ENCODE measurements at regions of chr2 and their contacts with region 1.

Region 1: GRCh38 chr2:157312866-157313486 is 12.6 kb downstream of the ERMN start:
- DNase-seq: peak; percentile 17
- H3K4me3 Mint-ChIP-seq: no peak overlapping the region
- H3K27ac Mint-ChIP-seq: peak overlapping the region; percentile 41
- H3K4me1 Mint-ChIP-seq: peaks cover 49% of the 10 kb centered on the region
- H3K27me3 Mint-ChIP-seq: no peaks in the 10 kb centered on the region

Region 2: GRCh38 chr2:156341452-156342253 is 971.3 kb before region 1 on chr2:
- CTCF ChIA-PET with region 1: no interaction called
- intact Hi-C with region 1: loop called (anchors 2 kb)
- DNase-seq: peak; percentile 94
- H3K4me3 Mint-ChIP-seq: peak overlapping the region; percentile 84
- H3K27ac Mint-ChIP-seq: peak overlapping the region; percentile 96
- H3K4me1 Mint-ChIP-seq: peaks cover 50% of the 10 kb centered on the region
- H3K27me3 Mint-ChIP-seq: no peaks in the 10 kb centered on the region

Region 3: GRCh38 chr2:157336137-157337010 is 23.4 kb after region 1 on chr2:
- CTCF ChIA-PET with region 1: interaction called, 263 read pairs
- intact Hi-C with region 1: loop called (anchors 1 kb)
- DNase-seq: peak; percentile 68
- H3K4me3 Mint-ChIP-seq: peak overlapping the region; percentile 40
- H3K27ac Mint-ChIP-seq: no peak overlapping the region
- H3K4me1 Mint-ChIP-seq: peaks cover 78% of the 10 kb centered on the region
- H3K27me3 Mint-ChIP-seq: no peaks in the 10 kb centered on the region

Region 4: DNA sequence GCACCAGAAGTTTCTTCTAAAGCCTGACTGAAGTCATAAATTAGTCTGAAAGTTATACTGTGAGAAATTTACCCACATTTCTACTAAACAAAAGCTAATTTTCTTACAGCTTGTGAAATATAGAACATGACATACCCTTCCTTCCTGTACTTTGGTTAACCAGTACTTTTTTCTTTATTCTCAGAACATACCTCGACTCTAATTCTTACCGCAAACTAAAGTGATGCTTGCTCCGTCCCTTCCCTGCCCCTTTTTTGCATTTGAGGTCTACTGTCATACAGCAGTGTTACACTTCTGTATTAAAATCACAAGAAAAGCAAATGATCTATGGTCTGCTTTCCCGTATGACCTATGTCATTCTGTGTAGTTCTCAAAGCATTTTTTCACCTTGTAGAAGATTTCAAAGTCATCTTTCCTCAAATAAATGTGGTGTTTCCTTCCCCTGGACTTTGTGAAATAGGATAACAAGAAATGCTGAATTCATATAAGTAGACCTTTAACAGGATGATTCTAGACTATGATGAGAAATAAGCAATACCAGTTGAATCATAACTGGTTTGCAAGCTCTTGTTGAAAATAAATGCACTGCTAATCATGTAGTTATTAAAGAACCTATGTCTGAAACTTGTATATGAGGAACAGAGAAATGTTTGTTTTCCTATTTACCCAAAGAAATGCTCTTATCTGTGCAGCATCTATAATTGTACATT is 100.5 kb after region 1 on chr2:
- CTCF ChIA-PET with region 1: interaction called, 3 read pairs
- intact Hi-C with region 1: loop called (anchors 1 kb)
- DNase-seq: peak; percentile 78
- H3K4me3 Mint-ChIP-seq: peak overlapping the region; percentile 64
- H3K27ac Mint-ChIP-seq: peak overlapping the region; percentile 99
- H3K4me1 Mint-ChIP-seq: peaks cover 90% of the 10 kb centered on the region
- H3K27me3 Mint-ChIP-seq: no peaks in the 10 kb centered on the region

Region 5: GRCh38 chr2:157486596-157487270 is 173.8 kb after region 1 on chr2:
- CTCF ChIA-PET with region 1: interaction called, 142 read pairs
- intact Hi-C with region 1: loop called (anchors 2 kb)
- DNase-seq: no peak
- H3K4me3 Mint-ChIP-seq: peak overlapping the region; percentile 68
- H3K27ac Mint-ChIP-seq: peak overlapping the region; percentile 87
- H3K4me1 Mint-ChIP-seq: peaks cover 86% of the 10 kb centered on the region
- H3K27me3 Mint-ChIP-seq: no peaks in the 10 kb centered on the region

Measured in activated naive CD4-positive, alpha-beta T cell treated with anti-CD3 and anti-CD28 coated beads for 36 hours (primary cell).